CD4-positive, alpha-beta T cell (primary cell): ENCODE measurements at regions of chr5 and their contacts with region 1.

Region 1: GRCh38 chr5:139422307-139422893 is 16.9 kb downstream of the DNAJC18 start:
- DNase-seq: peak in 10 of 14 experiments; percentile 28 to 87 (median 50)
- ATAC-seq: peak; percentile 99
- H3K4me3 ChIP-seq: no peak overlapping the region
- H3K4me3 Mint-ChIP-seq: no peak overlapping the region
- H3K27ac ChIP-seq: no peak overlapping the region
- H3K27ac Mint-ChIP-seq: peak overlapping the region; percentile 3
- H3K4me1 ChIP-seq: peaks cover 2% of the 10 kb centered on the region
- H3K4me1 Mint-ChIP-seq: peaks cover 14% of the 10 kb centered on the region
- H3K27me3 ChIP-seq: no peaks in the 10 kb centered on the region
- H3K27me3 Mint-ChIP-seq: no peaks in the 10 kb centered on the region
- CTCF ChIP-seq: peak; percentile 93

Region 2: DNA sequence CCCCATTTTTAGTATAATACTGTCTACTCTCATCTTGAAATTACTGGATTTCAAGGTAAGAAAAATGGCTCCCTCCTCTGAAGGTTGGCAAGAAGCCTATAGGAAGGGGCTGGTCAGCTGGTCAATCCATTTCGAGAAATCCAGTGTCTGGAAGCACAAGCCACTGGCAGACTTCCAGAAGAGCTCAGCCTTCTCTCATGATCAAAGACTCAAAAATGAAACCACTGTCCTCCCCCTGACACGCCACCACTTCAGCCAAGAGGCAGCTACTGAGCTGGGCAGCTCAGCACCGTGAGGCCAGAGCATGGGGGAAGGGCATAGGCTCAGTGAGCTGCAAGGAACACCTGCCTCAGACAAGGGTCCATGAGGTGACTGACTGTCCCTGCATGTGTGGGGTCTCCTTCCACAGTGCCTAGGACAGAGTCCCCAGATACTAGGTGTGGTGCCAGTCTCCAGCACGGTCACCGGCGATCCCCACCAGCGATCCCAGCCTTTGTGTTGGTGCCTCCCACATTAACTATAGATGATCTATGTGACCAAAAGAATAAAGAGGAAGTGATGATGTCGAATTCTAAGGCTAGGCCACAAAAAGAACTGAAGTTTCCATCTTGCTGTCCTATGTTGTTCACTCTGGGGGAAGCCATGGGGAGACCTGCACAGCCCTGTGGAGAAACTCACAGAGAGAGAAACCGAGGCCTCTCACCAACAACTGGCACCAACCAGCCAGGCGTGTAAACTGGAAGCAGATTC is 447.1 kb before region 1 on chr5:
- CTCF ChIA-PET with region 1: no interaction called
- POLR2A ChIA-PET with region 1: no interaction called
- intact Hi-C with region 1: no loop called
- DNase-seq: no peak
- ATAC-seq: no peak
- H3K4me3 ChIP-seq: no peak overlapping the region
- H3K4me3 Mint-ChIP-seq: no peak overlapping the region
- H3K27ac ChIP-seq: no peak overlapping the region
- H3K27ac Mint-ChIP-seq: no peak overlapping the region
- H3K4me1 ChIP-seq: peaks cover 10% of the 10 kb centered on the region
- H3K4me1 Mint-ChIP-seq: peaks cover 11% of the 10 kb centered on the region
- H3K27me3 ChIP-seq: no peaks in the 10 kb centered on the region
- H3K27me3 Mint-ChIP-seq: no peaks in the 10 kb centered on the region
- CTCF ChIP-seq: no peak

Region 3: GRCh38 chr5:139301808-139302499 is 120.4 kb before region 1 on chr5:
- CTCF ChIA-PET with region 1: no interaction called
- POLR2A ChIA-PET with region 1: no interaction called
- intact Hi-C with region 1: no loop called
- DNase-seq: no peak
- ATAC-seq: no peak
- H3K4me3 ChIP-seq: no peak overlapping the region
- H3K4me3 Mint-ChIP-seq: peak overlapping the region; percentile 56
- H3K27ac ChIP-seq: no peak overlapping the region
- H3K27ac Mint-ChIP-seq: peak overlapping the region; percentile 71
- H3K4me1 ChIP-seq: peaks cover 52% of the 10 kb centered on the region
- H3K4me1 Mint-ChIP-seq: peaks cover 97% of the 10 kb centered on the region
- H3K27me3 ChIP-seq: no peaks in the 10 kb centered on the region
- H3K27me3 Mint-ChIP-seq: no peaks in the 10 kb centered on the region
- CTCF ChIP-seq: no peak

Region 4: DNA sequence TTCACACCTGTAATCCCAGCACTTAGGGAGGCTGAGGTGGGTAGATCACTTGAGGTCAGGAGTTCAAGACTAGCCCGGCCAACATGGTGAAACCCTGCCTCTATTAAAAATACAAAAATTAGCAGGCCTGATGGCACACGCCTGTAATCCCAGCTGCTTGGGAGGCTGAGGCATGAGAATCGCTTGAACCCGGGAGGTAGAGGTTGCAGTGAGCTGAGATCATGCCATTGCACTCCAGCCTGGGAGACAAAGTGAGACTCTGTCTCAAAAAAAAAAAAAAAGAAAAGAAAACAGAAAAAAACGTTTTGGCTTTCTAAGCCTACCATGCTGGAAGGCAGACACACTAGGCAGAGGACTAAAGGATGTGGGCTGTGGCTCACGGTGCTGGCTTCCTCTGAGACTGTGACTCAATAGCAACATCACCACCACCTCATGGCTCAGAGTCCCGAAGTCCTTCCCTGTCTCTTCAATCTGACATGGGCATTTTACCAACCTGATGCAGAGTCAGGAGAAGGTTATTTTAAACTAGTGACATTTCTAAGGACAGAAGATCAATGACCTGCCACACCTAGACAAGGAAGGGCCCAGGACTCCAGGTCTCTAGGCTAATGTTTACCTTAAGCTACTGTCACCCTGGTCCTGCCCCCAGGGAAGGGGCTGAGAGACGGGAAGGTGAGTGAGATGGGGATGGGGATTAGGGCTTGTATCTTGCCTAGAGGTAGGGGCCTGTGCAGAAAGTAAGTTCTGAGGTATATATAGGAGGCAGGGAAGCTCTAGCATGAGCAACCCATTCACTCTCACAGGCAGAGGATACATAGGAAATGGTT is 36.4 kb after region 1 on chr5:
- CTCF ChIA-PET with region 1: interaction called, 17 read pairs
- POLR2A ChIA-PET with region 1: interaction called, 3 read pairs
- intact Hi-C with region 1: loop called in 1 of 2 experiments (anchors 2 kb)
- DNase-seq: peak; percentile 55 to 94 (median 73)
- ATAC-seq: peak; percentile 99
- H3K4me3 ChIP-seq: no peak overlapping the region
- H3K4me3 Mint-ChIP-seq: peak overlapping the region; percentile 3
- H3K27ac ChIP-seq: peak overlapping the region; percentile 69 to 83
- H3K27ac Mint-ChIP-seq: peak overlapping the region; percentile 89
- H3K4me1 ChIP-seq: peaks cover 69% of the 10 kb centered on the region
- H3K4me1 Mint-ChIP-seq: peaks cover 76% of the 10 kb centered on the region
- H3K27me3 ChIP-seq: no peaks in the 10 kb centered on the region
- H3K27me3 Mint-ChIP-seq: no peaks in the 10 kb centered on the region
- CTCF ChIP-seq: no peak

Region 5: DNA sequence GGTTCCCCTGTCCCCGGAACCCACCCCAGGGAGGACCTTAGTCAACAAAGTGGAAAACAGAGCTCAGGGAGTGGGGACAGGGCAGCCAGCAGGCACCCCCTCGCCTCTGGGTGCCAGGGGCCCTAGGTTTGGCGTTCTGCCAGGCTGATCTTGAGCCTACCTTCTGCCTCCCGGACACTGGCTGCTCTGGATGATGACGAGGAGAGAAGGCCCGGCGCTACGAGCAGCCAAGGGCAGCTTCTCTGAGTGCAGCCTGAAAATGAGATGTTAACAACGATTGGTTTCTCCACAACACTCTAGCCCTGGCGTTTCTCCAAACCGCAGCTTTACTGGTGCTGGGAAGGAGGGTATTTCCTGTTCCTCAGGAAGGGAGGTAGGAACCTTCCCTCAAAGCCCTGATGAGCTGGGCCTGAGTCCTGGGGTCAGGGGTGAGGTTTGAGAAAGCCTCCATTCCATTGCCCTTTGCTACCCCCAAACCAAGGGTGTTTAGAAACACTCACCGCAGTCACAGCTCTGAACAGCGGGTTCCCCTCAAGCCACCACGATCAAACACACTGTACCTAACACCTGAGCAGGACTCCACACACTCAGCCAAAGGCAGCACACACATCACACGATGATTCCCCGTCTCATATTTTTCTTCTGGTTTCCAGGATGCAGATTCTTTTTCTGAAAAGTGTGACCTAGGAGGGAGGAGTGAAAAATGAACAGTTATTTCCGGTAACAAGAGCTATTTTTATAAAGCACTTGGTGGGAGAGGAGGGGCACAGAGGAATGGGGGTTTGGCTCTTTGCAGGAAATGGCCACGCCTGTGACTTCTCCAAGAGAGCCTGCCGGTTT is 59.9 kb after region 1 on chr5 and contains the start of gene STING1:
- CTCF ChIA-PET with region 1: interaction called, 20 read pairs
- POLR2A ChIA-PET with region 1: interaction called, 19 read pairs
- intact Hi-C with region 1: no loop called
- DNase-seq: peak; percentile 40 to 88 (median 60)
- ATAC-seq: peak; percentile 71
- H3K4me3 ChIP-seq: peak within 1 kb of the TSS; percentile 81
- H3K4me3 Mint-ChIP-seq: peak within 1 kb of the TSS; percentile 91
- H3K27ac ChIP-seq: peak within 1 kb of the TSS; percentile 82
- H3K27ac Mint-ChIP-seq: peak within 1 kb of the TSS; percentile 92
- H3K4me1 ChIP-seq: peaks cover 57% of the 10 kb centered on the region
- H3K4me1 Mint-ChIP-seq: peaks cover 37% of the 10 kb centered on the region
- H3K27me3 ChIP-seq: no peaks in the 10 kb centered on the region
- H3K27me3 Mint-ChIP-seq: no peaks in the 10 kb centered on the region
- CTCF ChIP-seq: no peak
- total RNA-seq, gene STING1: 155 to 168 TPM

Region 6: DNA sequence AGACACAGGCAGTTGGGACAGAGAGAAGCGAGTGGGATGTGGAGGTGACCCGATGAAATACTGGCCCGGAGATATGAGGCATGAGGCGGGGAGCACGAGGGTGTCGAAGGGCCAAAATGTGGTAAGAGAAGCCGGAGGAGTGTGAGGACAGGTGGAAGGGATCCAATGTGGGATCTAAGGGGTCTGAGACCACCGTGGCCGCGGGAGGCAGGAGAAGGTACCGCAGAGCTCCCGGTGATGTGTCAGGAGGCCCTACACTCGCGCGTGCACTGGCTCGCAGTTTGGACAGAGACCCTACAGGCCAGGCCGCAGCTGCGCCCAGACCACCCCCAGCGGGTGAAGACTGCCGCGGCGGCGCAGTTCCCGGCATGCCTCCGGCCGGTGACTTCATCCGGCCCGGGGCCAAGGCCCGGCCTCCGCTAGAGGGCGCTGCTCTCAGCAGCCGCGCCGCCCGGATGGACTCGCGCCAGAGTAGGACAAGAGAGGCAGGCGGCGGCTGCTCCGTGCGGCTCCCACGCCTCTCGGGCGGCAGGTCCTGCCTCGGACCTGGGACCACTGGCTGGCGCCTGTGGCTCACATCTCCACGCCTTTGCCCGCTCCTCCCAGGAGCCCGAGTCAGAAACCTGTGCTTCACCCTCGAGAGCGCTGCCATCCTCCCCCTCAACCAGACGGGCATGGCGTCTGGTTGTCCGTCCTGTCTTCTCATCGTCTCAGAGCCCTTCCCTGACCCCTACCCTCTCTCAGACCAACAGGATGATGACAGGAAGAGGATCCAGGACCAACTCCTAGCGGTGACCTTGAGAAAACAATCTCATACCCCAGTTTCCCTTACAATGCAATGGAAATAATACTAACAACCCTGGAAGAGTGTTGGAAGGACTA is 95.5 kb after region 1 on chr5:
- CTCF ChIA-PET with region 1: interaction called, 132 read pairs
- POLR2A ChIA-PET with region 1: interaction called, 33 read pairs
- intact Hi-C with region 1: loop called (anchors 1 kb)
- DNase-seq: peak; percentile 72 to 95 (median 88)
- ATAC-seq: peak; percentile 92
- H3K4me3 ChIP-seq: peak overlapping the region; percentile 66
- H3K4me3 Mint-ChIP-seq: peak overlapping the region; percentile 88
- H3K27ac ChIP-seq: peak overlapping the region; percentile 64 to 66
- H3K27ac Mint-ChIP-seq: peak overlapping the region; percentile 87
- H3K4me1 ChIP-seq: peaks cover 22% of the 10 kb centered on the region
- H3K4me1 Mint-ChIP-seq: peaks cover 27% of the 10 kb centered on the region
- H3K27me3 ChIP-seq: no peaks in the 10 kb centered on the region
- H3K27me3 Mint-ChIP-seq: no peaks in the 10 kb centered on the region
- CTCF ChIP-seq: peak; percentile 95

Region 7: GRCh38 chr5:139690064-139690802 is 267.8 kb after region 1 on chr5:
- CTCF ChIA-PET with region 1: no interaction called
- POLR2A ChIA-PET with region 1: no interaction called
- intact Hi-C with region 1: loop called (anchors 1 to 5 kb)
- DNase-seq: peak in 4 of 14 experiments; percentile 37 to 54 (median 46)
- ATAC-seq: peak; percentile 51
- H3K4me3 ChIP-seq: no peak overlapping the region
- H3K4me3 Mint-ChIP-seq: no peak overlapping the region
- H3K27ac ChIP-seq: no peak overlapping the region
- H3K27ac Mint-ChIP-seq: no peak overlapping the region
- H3K4me1 ChIP-seq: peaks cover 2% of the 10 kb centered on the region
- H3K4me1 Mint-ChIP-seq: no peaks in the 10 kb centered on the region
- H3K27me3 ChIP-seq: no peaks in the 10 kb centered on the region
- H3K27me3 Mint-ChIP-seq: no peaks in the 10 kb centered on the region
- CTCF ChIP-seq: peak; percentile 34